ENCODE measurements at regions of chr3 and their contacts with region 1.

Region 1: DNA sequence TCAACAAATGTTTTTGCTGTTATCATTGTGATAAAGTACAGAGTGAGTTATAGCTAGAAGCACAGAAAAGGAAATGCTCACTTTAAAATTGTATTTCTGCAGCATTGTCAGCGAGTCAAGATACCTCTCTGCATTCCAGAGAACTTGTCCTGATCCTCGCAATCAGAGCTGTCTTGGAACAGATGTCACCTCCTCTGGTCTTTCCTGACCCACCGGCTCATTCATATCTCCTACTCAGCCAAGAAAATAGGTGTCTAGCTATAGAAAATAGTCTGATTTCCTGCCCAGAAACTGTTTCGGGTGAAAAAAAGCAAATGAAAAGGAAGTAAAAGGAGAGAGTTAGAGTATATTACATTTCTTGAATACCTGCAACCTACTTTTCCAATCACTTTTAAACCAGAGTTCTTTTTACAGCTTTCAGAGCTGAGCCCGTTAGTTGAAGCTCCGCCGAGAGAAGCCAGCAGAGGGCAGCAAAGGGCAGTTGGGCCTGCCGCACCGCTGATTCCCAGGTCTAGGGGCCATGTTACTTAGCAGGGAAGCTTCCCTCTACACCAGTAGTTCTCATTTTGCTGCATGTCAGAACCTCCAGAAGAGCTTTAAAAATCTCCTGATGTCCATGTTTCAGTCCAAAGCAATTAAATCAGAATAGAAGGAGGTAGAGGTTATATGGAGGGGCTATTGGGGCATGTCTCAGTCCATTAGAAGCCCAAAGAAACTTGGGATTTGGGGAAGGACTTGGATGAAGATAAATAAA is 185.7 kb upstream of the THRB start:
- DNase-seq: peak; percentile 72
- H3K4me3 ChIP-seq: no peak overlapping the region
- H3K27ac ChIP-seq: no peak overlapping the region
- H3K4me1 ChIP-seq: no peaks in the 10 kb centered on the region
- H3K27me3 ChIP-seq: no peaks in the 10 kb centered on the region
- CTCF ChIP-seq: peak; percentile 69

Region 2: GRCh38 chr3:23888617-23889228 is 791.7 kb before region 1 on chr3:
- intact Hi-C with region 1: loop called (anchors 10 kb)
- DNase-seq: no peak
- H3K4me3 ChIP-seq: no peak overlapping the region
- H3K27ac ChIP-seq: no peak overlapping the region
- H3K4me1 ChIP-seq: no peaks in the 10 kb centered on the region
- H3K27me3 ChIP-seq: no peaks in the 10 kb centered on the region
- CTCF ChIP-seq: peak; percentile 87

Region 3: GRCh38 chr3:23999012-23999641 is 681.3 kb before region 1 on chr3:
- intact Hi-C with region 1: loop called (anchors 2 kb)
- DNase-seq: peak; percentile 79
- H3K4me3 ChIP-seq: no peak overlapping the region
- H3K27ac ChIP-seq: no peak overlapping the region
- H3K4me1 ChIP-seq: no peaks in the 10 kb centered on the region
- H3K27me3 ChIP-seq: no peaks in the 10 kb centered on the region
- CTCF ChIP-seq: peak; percentile 75

Measured in colonic mucosa (tissue), 4 donors.